ENCODE measurements at regions of chr7 and their contacts with region 1.

Region 1: DNA sequence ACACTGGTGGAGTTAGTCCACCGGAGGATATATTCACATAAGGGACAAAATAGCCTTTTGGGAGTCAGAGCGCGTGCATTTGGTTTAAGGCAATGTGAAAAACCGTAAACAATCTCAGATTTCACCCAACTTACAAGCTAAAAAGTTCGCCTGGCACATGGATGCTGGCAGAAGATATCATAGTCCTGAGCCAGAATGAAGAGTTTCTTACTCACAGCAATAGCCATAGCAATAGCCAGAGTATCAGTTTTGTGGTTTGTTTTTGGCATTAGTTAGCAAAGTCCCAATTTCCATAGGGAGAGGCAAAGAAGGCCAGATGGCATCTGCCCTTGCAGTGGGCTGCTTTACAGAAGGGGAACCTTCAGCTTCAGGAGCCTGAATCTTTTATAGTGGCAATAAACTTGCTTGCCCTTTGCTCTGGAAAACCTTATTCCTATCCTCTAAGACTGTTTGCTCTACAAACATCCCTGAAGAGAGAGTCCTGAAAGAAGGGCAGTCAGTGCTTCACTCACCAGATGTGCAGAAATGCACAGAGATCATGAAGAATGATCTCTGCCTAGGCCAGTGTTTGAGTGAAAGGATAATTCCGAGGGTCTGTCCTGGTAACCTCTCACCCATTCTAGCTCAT is 28.7 kb upstream of the RSBN1L start:
- DNase-seq: no peak
- ATAC-seq: no peak
- H3K4me3 ChIP-seq: no peak overlapping the region
- H3K27ac ChIP-seq: no peak overlapping the region
- H3K4me1 ChIP-seq: peaks cover 6% of the 10 kb centered on the region
- H3K27me3 ChIP-seq: no peaks in the 10 kb centered on the region
- CTCF ChIP-seq: no peak
- POLR2A ChIP-seq: no peak

Region 2: GRCh38 chr7:77395626-77396025 is 271.9 kb before region 1 on chr7:
- intact Hi-C with region 1: no loop called
- DNase-seq: no peak
- ATAC-seq: no peak
- H3K4me3 ChIP-seq: no peak overlapping the region
- H3K27ac ChIP-seq: peak overlapping the region in 1 of 4 donors; percentile 15
- H3K4me1 ChIP-seq: peaks cover 5% of the 10 kb centered on the region
- H3K27me3 ChIP-seq: no peaks in the 10 kb centered on the region
- CTCF ChIP-seq: no peak
- POLR2A ChIP-seq: no peak

Region 3: GRCh38 chr7:77752021-77752420 is 84.4 kb after region 1 on chr7:
- intact Hi-C with region 1: loop called (anchors 5 kb)
- DNase-seq: peak in 1 of 4 donors; percentile 37
- ATAC-seq: no peak
- H3K4me3 ChIP-seq: no peak overlapping the region
- H3K27ac ChIP-seq: no peak overlapping the region
- H3K4me1 ChIP-seq: peaks cover 15% of the 10 kb centered on the region
- H3K27me3 ChIP-seq: no peaks in the 10 kb centered on the region
- CTCF ChIP-seq: no peak
- POLR2A ChIP-seq: no peak

Region 4: GRCh38 chr7:78176171-78176570 is 508.6 kb after region 1 on chr7:
- intact Hi-C with region 1: no loop called
- DNase-seq: no peak
- ATAC-seq: no peak
- H3K4me3 ChIP-seq: no peak overlapping the region
- H3K27ac ChIP-seq: no peak overlapping the region
- H3K4me1 ChIP-seq: no peaks in the 10 kb centered on the region
- H3K27me3 ChIP-seq: no peaks in the 10 kb centered on the region
- CTCF ChIP-seq: no peak
- POLR2A ChIP-seq: no peak